GM18951 (cell line): ENCODE measurements at regions of chr3 and their contacts with region 1.

Region 1: DNA sequence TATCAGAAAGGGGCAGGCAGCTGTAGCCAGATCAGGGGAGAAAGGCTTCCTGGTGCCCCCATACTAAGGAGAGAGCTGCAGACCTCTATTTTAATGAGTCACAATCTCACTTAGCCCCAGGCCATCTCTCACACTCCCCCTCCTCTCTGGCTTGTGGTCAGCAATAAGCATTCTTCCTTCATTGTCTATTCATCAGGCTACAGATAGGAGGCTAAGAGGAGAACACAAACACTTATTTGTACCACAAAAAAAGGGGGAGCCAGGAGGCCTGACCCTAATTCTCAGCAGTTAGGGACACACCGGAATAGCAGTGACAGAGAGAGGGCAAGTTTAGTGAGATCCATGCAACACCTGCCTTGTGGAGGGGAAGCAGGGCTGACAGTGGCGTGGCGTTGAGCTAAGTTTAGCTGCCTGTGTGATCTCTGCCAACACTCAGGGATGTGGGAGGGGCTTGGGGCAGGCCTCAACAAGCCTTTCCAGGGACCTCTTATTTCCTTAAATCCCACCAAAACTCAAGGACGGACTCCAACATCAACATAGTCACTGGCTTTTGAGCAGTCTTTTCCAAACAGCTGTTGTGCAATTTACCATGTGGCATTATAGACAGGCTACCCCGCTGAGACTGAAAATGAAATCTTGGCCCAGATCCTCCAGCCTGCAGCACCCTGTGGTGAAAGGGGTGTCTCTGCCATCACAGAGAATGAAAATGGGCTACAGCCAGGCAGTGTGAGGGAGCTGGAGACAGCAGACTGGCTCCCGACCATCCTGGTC is 191.9 kb upstream of the TSC22D2 start:
- POLR2A ChIP-seq: no peak

Region 2: GRCh38 chr3:149512209-149512782 is 703.9 kb before region 1 on chr3:
- in situ Hi-C with region 1: loop called (anchors 25 kb)
- POLR2A ChIP-seq: no peak